Heart left ventricle (tissue), 16 donors: ENCODE measurements at regions of chr16 and their contacts with region 1.

Region 1: GRCh38 chr16:27332105-27332504 is 18.3 kb downstream of the IL4R start:
- DNase-seq: peak in 3 of 5 donors; percentile 49 to 56 (median 50)
- ATAC-seq: peak in 3 of 4 donors; percentile 21 to 77 (median 40)
- H3K4me3 ChIP-seq: no peak overlapping the region
- H3K27ac ChIP-seq: peak overlapping the region in 10 of 12 donors; percentile 44 to 98 (median 79)
- H3K4me1 ChIP-seq: peaks cover 0 to 61% (median 24%) of the 10 kb centered on the region in 12 donors
- H3K27me3 ChIP-seq: no peaks in the 10 kb centered on the region
- CTCF ChIP-seq: no peak
- POLR2A ChIP-seq: no peak

Region 2: DNA sequence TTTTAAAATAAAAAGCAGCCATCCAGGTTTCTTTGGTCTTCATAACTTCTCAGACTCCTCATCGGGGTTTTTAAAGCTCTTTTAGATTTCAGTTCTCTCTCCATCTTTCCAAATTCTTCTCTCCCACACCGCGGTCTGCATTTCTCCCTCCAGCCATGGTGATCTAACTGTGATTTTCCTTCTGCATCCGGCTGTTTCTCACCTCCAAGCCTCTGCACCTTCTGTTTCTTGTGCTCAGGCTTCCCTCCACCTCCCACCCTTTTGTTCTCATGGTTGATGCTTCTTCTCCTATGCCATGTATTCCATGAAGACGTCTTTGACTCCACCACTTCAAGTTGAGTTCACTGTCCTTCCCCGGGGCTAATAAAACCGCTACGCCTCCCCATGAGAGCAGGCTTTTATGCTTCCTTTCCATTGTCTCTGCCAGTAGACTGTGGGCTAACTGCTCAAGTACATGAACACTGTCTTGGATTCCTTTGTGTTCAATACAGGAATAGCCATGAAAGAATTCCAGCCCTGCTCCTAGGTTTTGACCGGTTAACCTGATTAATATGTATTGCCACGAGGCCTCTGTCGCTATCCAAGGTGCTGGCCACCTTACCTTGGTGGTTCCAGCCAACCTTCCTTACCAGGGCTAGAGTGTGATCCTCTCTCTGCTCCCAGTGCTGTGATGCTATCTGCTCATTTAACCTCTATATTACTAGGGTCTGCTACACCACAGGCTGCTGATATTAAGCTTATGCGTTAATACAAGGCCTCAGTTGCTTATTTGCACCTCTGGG is 1015.2 kb before region 1 on chr16:
- intact Hi-C with region 1: no loop called
- DNase-seq: no peak
- ATAC-seq: no peak
- H3K4me3 ChIP-seq: no peak overlapping the region
- H3K27ac ChIP-seq: no peak overlapping the region
- H3K4me1 ChIP-seq: no peaks in the 10 kb centered on the region
- H3K27me3 ChIP-seq: peaks cover 0 to 5% (median 0%) of the 10 kb centered on the region in 9 donors
- CTCF ChIP-seq: no peak
- POLR2A ChIP-seq: no peak

Region 3: GRCh38 chr16:27235055-27235937 is 96.8 kb before region 1 on chr16:
- intact Hi-C with region 1: loop called in 1 of 10 experiments (anchors 2 kb)
- DNase-seq: peak; percentile 88 to 94 (median 91)
- ATAC-seq: peak; percentile 57 to 82 (median 81)
- H3K4me3 ChIP-seq: peak overlapping the region in 7 of 12 donors; percentile 5 to 31 (median 11)
- H3K27ac ChIP-seq: peak overlapping the region; percentile 24 to 91 (median 60)
- H3K4me1 ChIP-seq: peaks cover 0 to 73% (median 35%) of the 10 kb centered on the region in 12 donors
- H3K27me3 ChIP-seq: no peaks in the 10 kb centered on the region
- CTCF ChIP-seq: peak; percentile 67 to 93 (median 82)
- POLR2A ChIP-seq: no peak